AG04450 (cell line): ENCODE measurements at regions of chr3 and their contacts with region 1.

Region 1: GRCh38 chr3:185659942-185660921 is 74.1 kb downstream of the SENP2 start:
- DNase-seq: peak; percentile 64
- H3K4me3 ChIP-seq: no peak overlapping the region
- H3K27ac ChIP-seq: peak overlapping the region; percentile 47
- H3K27me3 ChIP-seq: no peaks in the 10 kb centered on the region
- CTCF ChIP-seq: peak; percentile 99

Region 2: DNA sequence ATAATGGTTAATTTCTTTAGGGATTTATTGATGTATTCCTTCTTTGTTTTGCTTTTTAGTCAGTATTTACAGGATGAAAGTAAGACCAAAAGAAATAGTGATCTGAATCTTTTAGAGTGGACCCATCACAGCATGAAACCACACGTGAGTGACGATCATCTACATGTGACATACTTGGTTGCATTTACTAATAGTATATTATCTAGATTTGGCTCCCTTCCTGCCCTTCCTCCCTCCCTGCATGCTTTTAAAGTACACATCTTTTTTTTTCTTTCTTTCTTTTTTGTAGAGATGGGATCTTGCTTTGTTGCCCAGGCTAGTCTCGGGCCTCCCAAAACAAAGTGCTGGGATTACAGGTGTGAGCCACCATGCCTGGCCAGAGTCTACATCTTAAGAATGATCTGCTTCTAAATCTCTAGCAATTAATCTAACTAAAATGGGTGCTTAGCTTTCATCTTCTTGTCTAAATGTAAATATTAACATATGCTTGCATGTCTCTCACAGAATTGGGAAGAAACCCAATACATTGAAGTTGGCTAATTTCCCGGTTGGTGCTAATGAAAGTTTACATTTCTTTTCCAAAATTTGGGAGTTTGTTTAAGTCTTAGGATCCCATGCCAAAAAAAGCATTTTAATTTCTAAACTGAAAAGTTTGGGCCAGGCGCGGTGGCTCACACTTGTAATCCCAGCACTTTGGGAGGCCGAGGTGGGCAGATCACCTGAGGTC is 36.1 kb before region 1 on chr3:
- CTCF ChIA-PET with region 1: no interaction called
- POLR2A ChIA-PET with region 1: no interaction called
- DNase-seq: no peak
- H3K4me3 ChIP-seq: no peak overlapping the region
- H3K27ac ChIP-seq: no peak overlapping the region
- H3K27me3 ChIP-seq: no peaks in the 10 kb centered on the region
- CTCF ChIP-seq: no peak

Region 3: GRCh38 chr3:185687271-185687878 is 27.1 kb after region 1 on chr3:
- CTCF ChIA-PET with region 1: interaction called, 17 read pairs
- POLR2A ChIA-PET with region 1: no interaction called
- DNase-seq: no peak
- H3K4me3 ChIP-seq: no peak overlapping the region
- H3K27ac ChIP-seq: no peak overlapping the region
- H3K27me3 ChIP-seq: no peaks in the 10 kb centered on the region
- CTCF ChIP-seq: no peak

Region 4: DNA sequence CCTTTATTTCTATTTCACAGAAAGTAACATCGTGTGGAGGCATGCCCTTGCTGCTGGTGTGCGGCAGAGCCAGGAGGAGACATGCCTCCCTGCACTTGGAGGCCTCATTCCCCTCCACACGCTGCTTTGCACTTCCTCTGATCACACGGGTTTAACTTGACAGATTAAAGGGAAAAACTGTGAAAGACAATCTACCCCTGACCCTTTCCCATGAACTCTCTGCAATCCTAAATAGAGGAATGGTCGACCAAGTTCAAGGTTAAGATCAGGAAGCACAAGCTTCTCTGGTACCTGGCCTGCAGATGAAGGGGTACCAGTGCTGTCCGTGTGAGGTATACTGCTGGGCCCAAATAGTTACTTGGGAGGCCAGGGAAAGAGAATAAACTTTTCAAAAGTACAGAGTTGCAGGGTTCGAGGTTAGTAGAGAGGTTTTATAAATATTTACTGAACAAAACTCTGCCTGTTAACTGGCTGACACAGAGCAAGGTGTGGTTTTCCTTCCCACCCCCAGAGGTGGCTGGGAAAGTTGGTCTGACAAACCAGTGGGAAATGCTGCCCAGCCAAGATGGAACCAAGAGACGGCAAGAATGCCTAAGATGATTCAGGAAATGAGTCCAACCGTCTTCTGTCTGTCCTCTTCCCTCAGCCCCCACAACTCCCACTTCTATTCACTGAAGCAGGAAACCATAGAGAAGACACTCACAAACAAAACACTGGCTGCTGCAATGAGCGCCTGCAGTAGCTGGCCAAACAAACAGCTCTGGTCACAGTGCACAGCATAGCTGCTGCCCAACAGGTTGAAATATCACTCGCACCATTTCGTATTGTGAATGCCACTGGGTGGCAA is 85.0 kb after region 1 on chr3:
- CTCF ChIA-PET with region 1: interaction called, 14 read pairs
- POLR2A ChIA-PET with region 1: interaction called, 5 read pairs
- DNase-seq: peak; percentile 64
- H3K4me3 ChIP-seq: no peak overlapping the region
- H3K27ac ChIP-seq: peak overlapping the region; percentile 71
- H3K27me3 ChIP-seq: no peaks in the 10 kb centered on the region
- CTCF ChIP-seq: no peak

Region 5: DNA sequence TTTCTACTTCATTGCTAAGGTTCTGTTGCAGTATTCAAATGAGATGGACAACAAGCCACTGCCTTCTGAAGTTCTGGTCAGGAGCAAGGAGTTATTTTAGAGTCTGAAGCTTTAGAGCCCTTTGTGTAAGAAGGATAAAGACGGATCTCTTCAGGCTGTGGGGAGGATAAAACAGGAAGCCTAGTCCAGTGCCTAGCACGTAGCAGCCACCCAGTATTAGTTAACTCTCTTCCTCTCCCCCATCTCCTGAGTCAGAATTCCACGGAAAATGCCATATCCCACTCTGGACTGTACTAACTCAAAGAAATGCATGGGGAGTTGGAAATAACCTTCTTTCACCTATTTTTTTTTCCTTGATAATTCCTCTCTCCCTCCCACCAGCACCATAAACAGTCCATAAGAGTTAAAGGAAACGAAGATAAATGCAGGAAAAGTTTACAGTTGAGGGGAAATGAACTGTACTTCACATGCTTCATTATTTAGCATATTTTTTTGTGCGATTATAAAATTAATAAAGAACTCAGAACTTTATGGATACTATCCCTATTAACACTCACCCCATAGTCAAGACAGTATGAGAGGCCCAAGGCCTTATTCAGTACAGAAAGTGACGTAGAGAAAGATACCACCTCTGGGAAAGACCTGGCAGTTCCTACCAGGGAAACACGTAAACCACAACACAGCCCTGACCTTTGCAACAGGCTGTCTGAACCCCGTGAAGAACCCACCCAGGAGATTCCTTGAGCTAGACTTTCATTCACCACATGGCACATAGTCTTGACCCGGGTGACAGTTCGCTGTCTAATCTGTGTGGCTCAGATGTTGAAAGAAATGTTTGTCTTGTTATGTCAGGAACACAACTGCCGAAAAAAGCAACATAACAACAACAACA is 155.4 kb after region 1 on chr3:
- CTCF ChIA-PET with region 1: interaction called, 48 read pairs
- POLR2A ChIA-PET with region 1: interaction called, 4 read pairs
- DNase-seq: no peak
- H3K4me3 ChIP-seq: no peak overlapping the region
- H3K27ac ChIP-seq: no peak overlapping the region
- H3K27me3 ChIP-seq: no peaks in the 10 kb centered on the region
- CTCF ChIP-seq: no peak

Region 6: DNA sequence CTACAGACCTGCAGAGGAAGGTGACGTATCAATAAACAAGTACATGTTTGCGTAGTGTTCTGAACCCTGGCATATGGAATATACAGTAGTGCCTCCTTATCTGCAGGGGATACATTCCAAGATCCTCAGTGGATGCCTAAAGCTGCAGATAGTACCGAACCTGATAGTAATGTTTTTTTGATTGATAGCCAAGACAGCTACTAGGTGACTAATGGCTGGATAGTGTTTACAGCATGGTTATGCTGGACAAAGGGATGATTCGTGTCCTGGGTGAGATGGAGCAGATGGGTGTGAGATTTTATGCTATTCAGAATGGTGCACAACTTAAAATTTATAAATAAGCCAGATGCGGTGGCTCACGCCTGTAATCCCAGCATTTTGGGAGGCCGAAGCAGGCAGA is 220.4 kb after region 1 on chr3:
- CTCF ChIA-PET with region 1: interaction called, 10 read pairs
- POLR2A ChIA-PET with region 1: no interaction called
- DNase-seq: no peak
- H3K4me3 ChIP-seq: no peak overlapping the region
- H3K27ac ChIP-seq: no peak overlapping the region
- H3K27me3 ChIP-seq: no peaks in the 10 kb centered on the region
- CTCF ChIP-seq: no peak

Region 7: DNA sequence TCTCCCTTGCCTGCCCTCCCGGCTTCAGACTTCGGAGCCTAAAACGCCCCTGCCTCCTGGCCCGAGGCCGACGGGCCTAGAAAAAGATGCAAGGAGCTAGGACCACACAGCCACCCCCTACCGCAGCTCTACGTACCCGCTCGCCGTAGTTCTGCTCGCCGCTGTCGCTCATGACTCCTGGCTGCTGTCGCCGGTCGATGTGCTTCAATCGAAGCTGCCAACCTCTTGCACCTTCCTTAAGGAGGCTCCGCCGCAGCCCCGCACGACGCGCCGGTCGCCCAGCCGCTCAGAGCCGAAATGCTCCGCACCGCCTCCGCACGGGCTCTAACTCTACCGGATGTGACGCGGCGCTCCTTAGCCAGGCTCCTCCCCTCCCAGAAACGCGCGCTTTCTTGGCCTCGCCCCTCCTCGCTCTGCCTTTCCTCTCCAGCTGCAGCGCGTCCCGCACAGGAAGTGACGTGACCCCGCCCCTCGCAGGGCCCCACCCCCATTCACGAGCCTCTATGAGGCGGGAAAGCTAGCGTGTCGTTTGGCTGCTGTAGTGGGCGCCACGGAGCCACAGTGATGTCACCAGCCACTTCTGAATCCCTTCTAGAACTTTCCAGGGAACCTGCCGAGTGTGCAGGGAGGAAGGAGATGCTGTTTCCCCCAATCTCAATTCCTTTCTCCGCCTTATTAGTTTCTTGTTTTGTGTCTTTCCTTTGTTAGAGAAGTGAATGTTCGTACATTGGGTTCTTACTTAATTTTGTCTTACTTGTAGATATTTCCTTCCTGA is 277.6 kb after region 1 on chr3 and contains the start of gene TRA2B:
- CTCF ChIA-PET with region 1: interaction called, 99 read pairs
- POLR2A ChIA-PET with region 1: interaction called, 12 read pairs
- DNase-seq: peak; percentile 94
- H3K4me3 ChIP-seq: peak within 1 kb of the TSS; percentile 99
- H3K27ac ChIP-seq: peak within 1 kb of the TSS; percentile 100
- H3K27me3 ChIP-seq: no peaks in the 10 kb centered on the region
- CTCF ChIP-seq: peak; percentile 34
- polyA plus RNA-seq, gene TRA2B: 170 and 216 TPM in 2 replicates